Activated T-helper 2 cell treated with anti-CD3 and anti-CD28 coated beads, Interferon-gamma antibody, Interleukin-2, Interleukin-4, amounts not matched to agents 10 μg/mL and 5 μg/mL and 100 μg/mL, durations not matched to agents 14 hours and 24 hours and 36 hours (primary cell): ENCODE measurements at regions of chr13 and their contacts with region 1.

Region 1: GRCh38 chr13:32997399-32997798 is 18.8 kb upstream of the KL start:
- DNase-seq: no peak
- H3K4me3 Mint-ChIP-seq: no peak overlapping the region
- H3K27ac Mint-ChIP-seq: no peak overlapping the region
- H3K4me1 Mint-ChIP-seq: no peaks in the 10 kb centered on the region
- H3K27me3 Mint-ChIP-seq: peaks cover 12% of the 10 kb centered on the region

Region 2: GRCh38 chr13:32917504-32917903 is 79.9 kb before region 1 on chr13:
- intact Hi-C with region 1: loop called (anchors 1 kb)
- DNase-seq: no peak
- H3K4me3 Mint-ChIP-seq: no peak overlapping the region
- H3K27ac Mint-ChIP-seq: peak overlapping the region; percentile 53
- H3K4me1 Mint-ChIP-seq: peaks cover 26% of the 10 kb centered on the region
- H3K27me3 Mint-ChIP-seq: no peaks in the 10 kb centered on the region

Region 3: DNA sequence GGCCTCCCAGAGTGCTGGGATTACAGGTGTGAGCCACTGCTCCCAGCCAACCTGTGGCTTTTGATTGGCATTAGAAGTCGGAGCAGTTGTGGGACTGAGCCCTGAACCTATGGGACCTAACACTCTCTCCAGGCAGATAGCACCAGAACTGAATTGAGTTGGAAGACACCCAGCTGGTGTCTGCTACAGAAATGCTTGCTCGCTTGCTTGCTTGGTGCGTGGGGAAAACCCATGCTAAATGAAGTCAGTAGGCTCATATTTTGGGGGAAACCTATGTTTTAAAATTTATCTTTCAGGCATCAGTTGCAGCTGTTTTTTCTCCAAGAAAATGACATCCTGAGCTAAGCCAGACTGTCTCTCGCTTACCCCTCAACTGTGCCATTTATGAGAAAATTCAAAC is 662.1 kb after region 1 on chr13:
- intact Hi-C with region 1: no loop called
- DNase-seq: no peak
- H3K4me3 Mint-ChIP-seq: no peak overlapping the region
- H3K27ac Mint-ChIP-seq: no peak overlapping the region
- H3K4me1 Mint-ChIP-seq: no peaks in the 10 kb centered on the region
- H3K27me3 Mint-ChIP-seq: no peaks in the 10 kb centered on the region

Region 4: GRCh38 chr13:34617473-34618083 is 1620.2 kb after region 1 on chr13:
- intact Hi-C with region 1: no loop called
- DNase-seq: no peak
- H3K4me3 Mint-ChIP-seq: no peak overlapping the region
- H3K27ac Mint-ChIP-seq: no peak overlapping the region
- H3K4me1 Mint-ChIP-seq: no peaks in the 10 kb centered on the region
- H3K27me3 Mint-ChIP-seq: no peaks in the 10 kb centered on the region